Thyroid gland (tissue), 4 donors: ENCODE measurements at regions of chr5 and their contacts with region 1.

Region 1: DNA sequence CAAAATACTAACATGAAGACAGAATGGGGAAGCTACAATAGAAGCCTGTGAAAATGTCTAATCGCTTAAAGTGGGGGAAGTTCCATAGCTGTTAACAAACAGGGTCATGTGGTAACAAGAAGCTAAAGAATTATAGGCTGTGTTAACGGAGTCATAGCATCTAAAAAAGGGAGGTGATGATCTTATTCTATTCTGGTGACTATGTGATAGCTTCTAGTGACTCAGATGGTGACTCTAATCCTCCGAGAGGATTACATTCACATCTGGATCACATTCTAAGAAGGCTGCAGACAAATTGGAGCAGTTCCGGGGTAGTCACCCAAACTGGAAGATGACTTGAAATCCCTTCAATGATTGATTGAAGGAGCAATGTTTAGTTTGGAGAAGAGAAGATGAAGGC is 142.1 kb downstream of the LIFR start:
- DNase-seq: no peak
- H3K4me3 ChIP-seq: no peak overlapping the region
- H3K27ac ChIP-seq: no peak overlapping the region
- H3K4me1 ChIP-seq: no peaks in the 10 kb centered on the region
- H3K27me3 ChIP-seq: no peaks in the 10 kb centered on the region
- CTCF ChIP-seq: no peak
- POLR2A ChIP-seq: no peak

Region 2: DNA sequence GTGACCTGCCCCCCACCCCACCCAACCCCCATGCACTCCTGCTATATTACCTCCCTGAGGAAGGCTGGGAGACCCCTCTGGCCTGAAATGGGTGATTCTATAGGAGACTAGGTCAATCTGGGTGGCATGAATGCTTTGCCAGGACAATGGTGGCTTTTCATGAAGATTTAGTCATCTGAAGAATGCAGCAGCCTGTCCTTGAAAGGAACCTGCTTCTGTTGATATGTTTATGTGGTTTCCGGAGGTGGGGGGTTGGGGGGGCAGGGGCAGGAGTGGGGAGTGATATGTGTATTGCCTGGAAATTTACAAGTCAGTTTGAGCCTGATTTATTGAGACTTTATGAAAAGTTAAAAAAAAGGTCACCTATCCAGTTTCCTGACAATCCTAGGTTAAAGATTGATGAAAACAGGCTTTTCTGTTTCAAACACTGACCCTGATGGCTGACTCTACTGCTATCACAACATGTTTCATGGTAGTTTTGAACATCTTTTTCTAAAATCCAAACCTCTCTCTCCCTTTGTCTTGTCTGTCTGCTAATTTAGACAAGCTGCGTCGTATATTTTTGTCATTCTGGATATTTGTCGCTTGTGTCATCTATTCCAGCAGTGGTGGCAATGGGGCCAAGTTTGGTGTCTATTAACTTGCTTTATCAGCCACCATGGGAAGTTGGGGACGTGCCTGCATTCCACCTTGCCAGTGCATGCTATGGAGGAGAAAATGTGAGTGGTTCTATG is 309.7 kb before region 1 on chr5:
- intact Hi-C with region 1: no loop called
- DNase-seq: no peak
- H3K4me3 ChIP-seq: no peak overlapping the region
- H3K27ac ChIP-seq: no peak overlapping the region
- H3K4me1 ChIP-seq: no peaks in the 10 kb centered on the region
- H3K27me3 ChIP-seq: no peaks in the 10 kb centered on the region
- CTCF ChIP-seq: no peak
- POLR2A ChIP-seq: no peak

Region 3: GRCh38 chr5:38922199-38922598 is 507.9 kb after region 1 on chr5:
- intact Hi-C with region 1: loop called (anchors 10 kb)
- DNase-seq: peak; percentile 52 to 65
- H3K4me3 ChIP-seq: no peak overlapping the region
- H3K27ac ChIP-seq: no peak overlapping the region
- H3K4me1 ChIP-seq: no peaks in the 10 kb centered on the region
- H3K27me3 ChIP-seq: no peaks in the 10 kb centered on the region
- CTCF ChIP-seq: peak in 5 of 6 experiments; percentile 37 to 80 (median 60)
- POLR2A ChIP-seq: no peak